OCI-LY7 (cell line): ENCODE measurements at regions of chrX and their contacts with region 1.

Region 1: GRCh38 chrX:118495061-118495921 is at the start of gene DOCK11:
- DNase-seq: peak; percentile 90
- H3K4me3 ChIP-seq: peak within 1 kb of the TSS; percentile 91
- H3K27ac ChIP-seq: peak within 1 kb of the TSS; percentile 78
- H3K4me1 ChIP-seq: peaks cover 21% of the 10 kb centered on the region
- CTCF ChIP-seq: no peak
- total RNA-seq, gene DOCK11: 24.9 and 27.0 TPM in 2 replicates

Region 2: GRCh38 chrX:118345401-118346257 is 149.7 kb before region 1 on chrX and contains the start of gene WDR44:
- CTCF ChIA-PET with region 1: no interaction called
- POLR2A ChIA-PET with region 1: no interaction called
- intact Hi-C with region 1: loop called (anchors 2 kb)
- DNase-seq: peak; percentile 94
- H3K4me3 ChIP-seq: peak within 1 kb of the TSS; percentile 93
- H3K27ac ChIP-seq: peak within 1 kb of the TSS; percentile 79
- H3K4me1 ChIP-seq: peaks cover 26% of the 10 kb centered on the region
- CTCF ChIP-seq: no peak
- total RNA-seq, gene WDR44: 9.3 and 9.4 TPM in 2 replicates

Region 3: DNA sequence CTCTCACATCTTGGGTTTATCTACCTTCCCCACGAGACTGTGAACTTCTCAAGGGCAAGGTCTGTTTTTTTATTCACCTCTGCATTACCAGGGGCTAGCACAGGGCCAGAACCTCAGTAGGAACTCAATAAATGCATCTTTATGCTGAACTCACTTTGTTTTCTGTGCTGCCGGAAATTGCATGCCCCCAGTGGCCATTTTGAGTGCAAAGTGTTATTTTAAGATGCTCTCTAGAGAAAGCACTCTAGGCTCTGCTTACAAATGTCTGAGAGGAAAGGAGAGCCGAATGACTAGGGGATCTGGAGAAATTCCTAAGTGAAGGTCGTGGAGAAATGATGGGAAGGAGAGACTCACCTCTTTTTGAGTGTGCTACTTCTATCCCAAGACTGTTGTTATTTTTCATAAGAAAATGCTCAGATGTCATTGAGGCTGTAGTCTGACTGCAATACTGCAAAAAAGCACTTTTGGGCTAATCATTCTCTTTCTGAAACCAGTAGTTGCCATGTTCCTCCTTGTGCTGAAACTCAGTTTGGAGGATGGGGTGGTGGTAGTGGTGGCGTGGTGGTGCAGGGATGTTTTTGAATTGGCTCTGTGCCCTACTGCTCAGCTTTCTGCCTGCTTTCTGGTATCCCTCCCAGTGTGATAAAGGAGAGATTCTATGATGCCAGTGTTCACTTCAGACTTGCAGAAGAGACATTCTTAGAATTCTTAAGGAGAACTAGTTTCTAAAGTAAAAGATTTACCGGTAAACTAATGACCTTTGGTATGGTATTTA is 41.6 kb after region 1 on chrX:
- CTCF ChIA-PET with region 1: no interaction called
- POLR2A ChIA-PET with region 1: interaction called, 15 read pairs
- intact Hi-C with region 1: loop called (anchors 1 kb)
- DNase-seq: peak; percentile 67
- H3K4me3 ChIP-seq: peak overlapping the region; percentile 40
- H3K27ac ChIP-seq: peak overlapping the region; percentile 68
- H3K4me1 ChIP-seq: peaks cover 26% of the 10 kb centered on the region
- CTCF ChIP-seq: peak; percentile 76